ENCODE measurements at regions of chr4 and their contacts with region 1.

Region 1: GRCh38 chr4:165464813-165465381 is 86.1 kb downstream of the CPE start:
- DNase-seq: peak; percentile 18
- ATAC-seq: peak; percentile 79
- H3K4me3 ChIP-seq: no peak overlapping the region
- H3K27ac ChIP-seq: no peak overlapping the region
- H3K4me1 ChIP-seq: no peaks in the 10 kb centered on the region
- H3K27me3 ChIP-seq: no peaks in the 10 kb centered on the region
- CTCF ChIP-seq: peak; percentile 71
- EP300 ChIP-seq: no peak
- POLR2A ChIP-seq: no peak
- RAD21 ChIP-seq: peak; percentile 68

Region 2: DNA sequence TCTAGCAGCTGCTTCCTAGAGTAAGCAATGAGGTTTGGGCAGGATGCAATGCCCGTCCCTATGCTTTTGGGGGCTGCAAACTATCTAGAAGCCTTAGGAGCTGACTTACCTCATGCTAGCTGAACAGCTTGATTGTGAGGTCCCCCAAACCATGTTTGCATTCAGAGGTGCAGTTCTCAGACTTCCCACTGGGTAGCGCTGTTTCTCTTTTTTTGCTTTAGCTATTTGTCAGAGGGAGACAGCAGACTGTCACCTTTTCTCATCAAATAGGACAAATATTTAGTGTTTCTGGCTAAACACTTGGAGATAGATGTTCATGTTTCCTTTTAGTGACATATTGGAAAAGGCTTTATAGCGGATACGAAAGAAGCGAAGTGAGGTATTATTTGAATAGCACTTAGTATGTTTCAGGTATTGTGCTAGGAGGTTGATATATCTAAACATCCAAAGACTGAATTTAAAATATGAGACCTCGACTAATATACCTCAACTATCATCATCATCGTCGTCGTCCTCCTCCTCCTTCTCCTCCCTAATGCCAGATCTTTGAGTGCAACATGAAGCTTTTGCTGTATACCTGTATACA is 333.6 kb before region 1 on chr4:
- CTCF ChIA-PET with region 1: interaction called, 9 read pairs
- POLR2A ChIA-PET with region 1: no interaction called
- in situ Hi-C with region 1: loop called (anchors 5 kb)
- intact Hi-C with region 1: loop called (anchors 1 kb)
- DNase-seq: peak; percentile 57
- ATAC-seq: peak; percentile 93
- H3K4me3 ChIP-seq: no peak overlapping the region
- H3K27ac ChIP-seq: no peak overlapping the region
- H3K4me1 ChIP-seq: peaks cover 15% of the 10 kb centered on the region
- H3K27me3 ChIP-seq: peaks cover 0 to 11% of the 10 kb centered on the region in 2 experiments; a peak in 2 of 5 replicates
- CTCF ChIP-seq: peak; percentile 85
- EP300 ChIP-seq: no peak
- POLR2A ChIP-seq: no peak
- RAD21 ChIP-seq: peak; percentile 82

Region 3: GRCh38 chr4:165450871-165451270 is 14.0 kb before region 1 on chr4:
- CTCF ChIA-PET with region 1: no interaction called
- POLR2A ChIA-PET with region 1: no interaction called
- in situ Hi-C with region 1: no loop called
- intact Hi-C with region 1: loop called (anchors 1 kb)
- DNase-seq: no peak
- ATAC-seq: no peak
- H3K4me3 ChIP-seq: no peak overlapping the region
- H3K27ac ChIP-seq: no peak overlapping the region
- H3K4me1 ChIP-seq: peaks cover 10% of the 10 kb centered on the region
- H3K27me3 ChIP-seq: no peaks in the 10 kb centered on the region
- CTCF ChIP-seq: no peak
- EP300 ChIP-seq: no peak
- POLR2A ChIP-seq: no peak
- RAD21 ChIP-seq: no peak